ENCODE measurements at regions of chr3 and their contacts with region 1.

Region 1: GRCh38 chr3:106518516-106518915 is 649.7 kb upstream of the CBLB start:
- DNase-seq: no peak
- ATAC-seq: no peak
- H3K4me3 ChIP-seq: no peak overlapping the region
- H3K4me3 Mint-ChIP-seq: no peak overlapping the region
- H3K27ac ChIP-seq: no peak overlapping the region
- H3K27ac Mint-ChIP-seq: no peak overlapping the region
- H3K4me1 ChIP-seq: no peaks in the 10 kb centered on the region
- H3K4me1 Mint-ChIP-seq: no peaks in the 10 kb centered on the region
- H3K27me3 ChIP-seq: no peaks in the 10 kb centered on the region
- H3K27me3 Mint-ChIP-seq: peaks cover 0 to 6% (median 0%) of the 10 kb centered on the region in 5 donors

Region 2: DNA sequence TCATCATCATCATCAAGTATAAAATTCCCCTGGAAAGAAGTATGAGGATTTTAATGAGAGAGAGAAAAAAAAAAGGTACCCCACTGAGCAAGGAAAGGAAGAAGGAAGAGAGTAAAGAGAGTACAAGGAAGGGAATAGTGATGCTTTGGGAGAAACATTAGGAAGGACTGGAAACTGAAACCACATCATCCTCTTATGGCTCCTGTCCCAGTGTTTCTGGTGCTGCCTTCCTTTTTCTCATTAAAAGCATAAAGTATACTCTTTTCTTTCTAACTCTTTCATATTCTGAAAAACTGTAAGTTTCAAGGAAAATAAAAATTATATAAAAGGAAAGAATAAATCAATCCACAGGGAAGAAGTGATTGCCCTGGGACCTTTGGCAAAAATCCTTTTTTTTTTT is 33.3 kb before region 1 on chr3:
- CTCF ChIA-PET with region 1: no interaction called
- POLR2A ChIA-PET with region 1: no interaction called
- intact Hi-C with region 1: loop called in 1 of 2 experiments (anchors 2 kb)
- DNase-seq: no peak
- ATAC-seq: no peak
- H3K4me3 ChIP-seq: no peak overlapping the region
- H3K4me3 Mint-ChIP-seq: no peak overlapping the region
- H3K27ac ChIP-seq: no peak overlapping the region
- H3K27ac Mint-ChIP-seq: no peak overlapping the region
- H3K4me1 ChIP-seq: no peaks in the 10 kb centered on the region
- H3K4me1 Mint-ChIP-seq: no peaks in the 10 kb centered on the region
- H3K27me3 ChIP-seq: no peaks in the 10 kb centered on the region
- H3K27me3 Mint-ChIP-seq: peaks cover 0 to 4% (median 0%) of the 10 kb centered on the region in 5 donors

Region 3: GRCh38 chr3:108287146-108287545 is 1768.6 kb after region 1 on chr3:
- CTCF ChIA-PET with region 1: no interaction called
- POLR2A ChIA-PET with region 1: no interaction called
- intact Hi-C with region 1: no loop called
- DNase-seq: no peak
- ATAC-seq: no peak
- H3K4me3 ChIP-seq: no peak overlapping the region
- H3K4me3 Mint-ChIP-seq: no peak overlapping the region
- H3K27ac ChIP-seq: no peak overlapping the region
- H3K27ac Mint-ChIP-seq: no peak overlapping the region
- H3K4me1 ChIP-seq: no peaks in the 10 kb centered on the region
- H3K4me1 Mint-ChIP-seq: peaks cover under 1 to 31% (median 5%) of the 10 kb centered on the region in 7 donors
- H3K27me3 ChIP-seq: no peaks in the 10 kb centered on the region
- H3K27me3 Mint-ChIP-seq: no peaks in the 10 kb centered on the region

Measured in naive thymus-derived CD4-positive, alpha-beta T cell (primary cell).